ENCODE measurements at regions of chr21 and their contacts with region 1.

Region 1: GRCh38 chr21:42400525-42400924 is 3.2 kb upstream of the UBASH3A start:
- DNase-seq: peak in 3 of 14 experiments; percentile 39 to 58 (median 54)
- ATAC-seq: no peak
- H3K4me3 ChIP-seq: no peak overlapping the region
- H3K4me3 Mint-ChIP-seq: peak overlapping the region; percentile 57
- H3K27ac ChIP-seq: no peak overlapping the region
- H3K27ac Mint-ChIP-seq: peak overlapping the region; percentile 79
- H3K4me1 ChIP-seq: peaks cover 47% of the 10 kb centered on the region
- H3K4me1 Mint-ChIP-seq: peaks cover 68% of the 10 kb centered on the region
- H3K27me3 ChIP-seq: no peaks in the 10 kb centered on the region
- H3K27me3 Mint-ChIP-seq: no peaks in the 10 kb centered on the region
- CTCF ChIP-seq: no peak

Region 2: DNA sequence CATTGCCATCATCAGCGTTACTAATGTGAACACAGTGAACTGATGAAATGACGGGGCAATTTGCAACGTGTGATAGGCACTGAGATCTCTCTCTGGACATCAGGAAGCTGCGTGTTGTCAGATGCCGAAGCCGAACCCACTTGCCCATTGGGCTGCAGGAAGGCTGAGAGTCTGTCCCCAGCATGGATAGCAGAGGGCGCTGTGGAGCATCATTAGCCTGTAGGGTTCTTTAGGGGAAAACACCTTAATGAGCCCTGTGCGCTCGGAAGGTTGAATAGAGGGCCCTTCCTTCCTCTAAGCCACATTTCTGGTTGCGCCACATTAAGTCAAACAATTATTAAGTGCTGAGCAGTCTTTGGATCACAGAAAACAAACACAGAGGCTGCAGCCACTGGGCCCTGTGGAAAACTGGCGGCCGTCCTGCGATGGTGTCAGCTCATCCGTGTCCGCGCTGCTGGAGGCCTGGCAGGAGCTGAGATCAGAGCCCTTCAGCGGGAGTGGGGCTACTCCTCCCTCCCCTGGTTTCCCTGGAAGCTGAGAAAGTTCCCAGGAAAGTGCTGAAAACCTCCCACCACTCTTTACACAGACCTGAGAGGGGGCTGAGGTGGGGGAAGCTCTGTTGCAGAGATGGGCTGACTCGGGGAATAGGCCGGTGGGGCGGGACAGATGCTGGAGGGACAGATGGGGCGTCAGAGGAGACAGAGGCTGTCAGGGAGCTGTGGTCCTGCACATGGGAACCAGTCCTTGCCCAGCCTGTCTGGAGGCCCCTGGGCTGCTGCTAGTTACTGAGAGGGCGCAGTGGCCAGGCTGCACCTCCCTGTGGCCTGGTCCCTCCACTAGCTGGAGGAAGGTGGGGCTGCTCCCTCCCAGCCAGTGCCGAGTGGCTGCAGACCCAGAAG is 62.4 kb before region 1 on chr21:
- CTCF ChIA-PET with region 1: interaction called, 3 read pairs
- POLR2A ChIA-PET with region 1: interaction called, 11 read pairs
- intact Hi-C with region 1: loop called in 1 of 2 experiments (anchors 5 kb)
- DNase-seq: peak; percentile 74 to 93 (median 82)
- ATAC-seq: peak; percentile 100
- H3K4me3 ChIP-seq: no peak overlapping the region
- H3K4me3 Mint-ChIP-seq: no peak overlapping the region
- H3K27ac ChIP-seq: no peak overlapping the region
- H3K27ac Mint-ChIP-seq: peak overlapping the region; percentile 28
- H3K4me1 ChIP-seq: peaks cover 9% of the 10 kb centered on the region
- H3K4me1 Mint-ChIP-seq: peaks cover 8% of the 10 kb centered on the region
- H3K27me3 ChIP-seq: peaks cover 0 to 3% of the 10 kb centered on the region in 2 experiments
- H3K27me3 Mint-ChIP-seq: no peaks in the 10 kb centered on the region
- CTCF ChIP-seq: peak; percentile 87

Region 3: GRCh38 chr21:42414928-42415769 is 14.6 kb after region 1 on chr21:
- CTCF ChIA-PET with region 1: interaction called, 4 read pairs
- POLR2A ChIA-PET with region 1: interaction called, 208 read pairs
- intact Hi-C with region 1: no loop called
- DNase-seq: peak; percentile 69 to 98 (median 85)
- ATAC-seq: peak; percentile 89
- H3K4me3 ChIP-seq: peak overlapping the region; percentile 17
- H3K4me3 Mint-ChIP-seq: peak overlapping the region; percentile 82
- H3K27ac ChIP-seq: peak overlapping the region; percentile 90 to 95
- H3K27ac Mint-ChIP-seq: no peak overlapping the region
- H3K4me1 ChIP-seq: peaks cover 73% of the 10 kb centered on the region
- H3K4me1 Mint-ChIP-seq: peaks cover 63% of the 10 kb centered on the region
- H3K27me3 ChIP-seq: no peaks in the 10 kb centered on the region
- H3K27me3 Mint-ChIP-seq: no peaks in the 10 kb centered on the region
- CTCF ChIP-seq: no peak

Region 4: GRCh38 chr21:42437786-42438645 is 37.5 kb after region 1 on chr21:
- CTCF ChIA-PET with region 1: no interaction called
- POLR2A ChIA-PET with region 1: interaction called, 10 read pairs
- intact Hi-C with region 1: loop called in 1 of 2 experiments (anchors 5 kb)
- DNase-seq: no peak
- ATAC-seq: no peak
- H3K4me3 ChIP-seq: no peak overlapping the region
- H3K4me3 Mint-ChIP-seq: no peak overlapping the region
- H3K27ac ChIP-seq: peak overlapping the region in 1 of 2 donors; percentile 5
- H3K27ac Mint-ChIP-seq: peak overlapping the region; percentile 84
- H3K4me1 ChIP-seq: peaks cover 31% of the 10 kb centered on the region
- H3K4me1 Mint-ChIP-seq: peaks cover 62% of the 10 kb centered on the region
- H3K27me3 ChIP-seq: no peaks in the 10 kb centered on the region
- H3K27me3 Mint-ChIP-seq: no peaks in the 10 kb centered on the region
- CTCF ChIP-seq: no peak

Region 5: DNA sequence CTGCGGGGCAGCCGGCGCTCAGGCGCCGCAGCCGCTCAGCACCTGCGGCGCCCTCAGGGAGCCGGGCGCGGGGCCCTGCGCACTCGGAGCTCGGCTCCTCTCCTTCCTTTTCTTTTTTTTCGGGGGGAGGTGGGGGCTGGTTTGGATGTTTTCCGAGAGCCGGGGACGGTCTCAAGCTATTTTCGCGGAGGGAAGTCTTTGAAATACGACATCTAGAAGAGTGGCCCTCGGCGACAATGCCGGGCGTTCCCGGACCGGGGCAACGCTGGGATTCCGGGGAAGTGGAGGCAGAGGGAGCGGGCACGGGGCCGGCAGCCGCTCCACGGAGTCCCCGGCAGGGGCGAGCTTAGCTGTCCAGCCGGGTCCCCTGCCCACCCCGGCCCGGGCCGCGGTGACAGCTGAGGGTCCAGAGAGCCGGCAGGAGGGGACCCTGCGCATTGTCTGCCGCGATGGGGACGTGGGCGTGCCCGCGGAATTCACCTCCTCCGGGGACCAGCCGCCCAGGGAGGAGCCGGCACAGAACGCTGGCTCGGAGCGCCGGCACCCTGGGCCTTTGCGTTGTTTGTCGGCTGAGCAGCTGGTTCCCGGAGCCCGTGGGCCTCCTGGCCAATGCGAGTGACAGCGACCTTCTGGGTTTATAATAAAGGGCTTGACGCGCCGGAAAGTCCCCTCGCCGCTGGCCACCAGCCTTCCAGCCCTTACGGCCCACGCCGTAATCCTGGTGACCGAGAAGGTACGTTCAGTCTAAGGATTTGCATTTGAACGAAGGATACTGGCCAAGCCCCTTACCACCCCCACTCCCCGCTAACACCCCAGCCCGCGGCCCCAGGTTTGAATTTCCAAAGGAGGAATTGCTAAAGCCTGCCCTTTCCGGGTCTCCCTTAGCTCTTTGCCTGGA is 113.7 kb after region 1 on chr21:
- CTCF ChIA-PET with region 1: no interaction called
- POLR2A ChIA-PET with region 1: interaction called, 12 read pairs
- intact Hi-C with region 1: no loop called
- DNase-seq: peak; percentile 36 to 81 (median 53)
- ATAC-seq: peak; percentile 84
- H3K4me3 ChIP-seq: peak overlapping the region; percentile 82
- H3K4me3 Mint-ChIP-seq: peak overlapping the region; percentile 88
- H3K27ac ChIP-seq: peak overlapping the region; percentile 48 to 65
- H3K27ac Mint-ChIP-seq: peak overlapping the region; percentile 76
- H3K4me1 ChIP-seq: peaks cover 28% of the 10 kb centered on the region
- H3K4me1 Mint-ChIP-seq: peaks cover 31% of the 10 kb centered on the region
- H3K27me3 ChIP-seq: no peaks in the 10 kb centered on the region
- H3K27me3 Mint-ChIP-seq: no peaks in the 10 kb centered on the region
- CTCF ChIP-seq: no peak